A549 (cell line): ENCODE measurements at regions of chr2 and their contacts with region 1.

Region 1: GRCh38 chr2:11239666-11240462 is 84.6 kb downstream of the SLC66A3 start:
- DNase-seq: peak in 1 of 2 experiments; percentile 26
- ATAC-seq: peak in 1 of 2 experiments; percentile 50; a peak in 3 of 6 replicates
- H3K4me3 ChIP-seq: no peak overlapping the region
- H3K27ac ChIP-seq: 0 out of 6 replicates have a peak overlapping the region, but pooled peaks of 1 of the 2 experiments have one; percentile 1
- H3K4me1 ChIP-seq: peaks cover 40% of the 10 kb centered on the region
- CTCF ChIP-seq: no peak
- EP300 ChIP-seq: no peak
- POLR2A ChIP-seq: no peak
- RAD21 ChIP-seq: no peak

Region 2: GRCh38 chr2:11250400-11251196 is 10.7 kb after region 1 on chr2:
- CTCF ChIA-PET with region 1: interaction called, 4 read pairs
- POLR2A ChIA-PET with region 1: interaction called, 11 read pairs
- DNase-seq: no peak
- ATAC-seq: peak; percentile 10 to 31; a peak in 3 of 6 replicates
- H3K4me3 ChIP-seq: no peak overlapping the region
- H3K27ac ChIP-seq: no peak overlapping the region
- H3K4me1 ChIP-seq: peaks cover 36% of the 10 kb centered on the region
- CTCF ChIP-seq: no peak
- EP300 ChIP-seq: no peak
- POLR2A ChIP-seq: no peak
- RAD21 ChIP-seq: no peak